HepG2 (cell line): ENCODE measurements at regions of chr15 and their contacts with region 1.

Region 1: DNA sequence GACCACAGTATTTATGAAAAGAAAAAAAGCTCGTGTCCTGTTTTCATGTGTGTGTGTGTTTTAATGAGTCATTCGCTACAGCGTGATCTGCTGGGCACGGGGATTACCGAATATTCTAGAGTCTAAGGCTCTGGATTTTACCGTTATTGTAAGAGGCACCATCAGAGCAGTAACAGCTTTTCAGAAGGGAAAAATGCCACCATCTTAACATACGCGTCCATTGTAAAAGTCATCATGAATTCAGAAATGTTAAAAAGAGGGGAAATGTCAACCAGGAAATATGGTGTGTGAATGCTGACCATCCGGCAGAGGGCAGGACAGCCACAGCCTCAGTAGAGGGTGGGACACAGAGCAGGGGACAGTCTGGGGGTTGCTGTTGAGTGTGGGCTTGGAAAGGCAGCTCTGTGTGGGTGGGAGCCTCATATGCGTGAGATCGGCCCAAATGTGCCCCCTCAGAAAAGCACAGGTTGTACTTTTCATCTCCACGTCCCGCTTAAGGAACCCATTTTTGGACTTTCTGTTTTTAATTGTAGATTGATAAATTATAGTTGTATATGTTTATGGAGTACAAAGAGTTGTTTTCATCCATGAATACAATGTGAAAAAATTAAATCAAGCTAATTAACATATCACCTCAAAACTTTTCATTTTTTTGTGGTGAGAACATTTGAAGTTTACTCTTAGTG is 69.6 kb downstream of the ASB7 start:
- DNase-seq: peak; percentile 33
- ATAC-seq: peak; percentile 93
- H3K4me3 ChIP-seq: no peak overlapping the region
- H3K27ac ChIP-seq: no peak overlapping the region
- H3K4me1 ChIP-seq: no peaks in the 10 kb centered on the region
- H3K27me3 ChIP-seq: peaks cover 0 to 14% of the 10 kb centered on the region in 2 experiments; a peak in 4 of 5 replicates
- CTCF ChIP-seq: peak; percentile 89
- EP300 ChIP-seq: no peak
- POLR2A ChIP-seq: no peak
- RAD21 ChIP-seq: peak; percentile 74

Region 2: GRCh38 chr15:100721770-100722550 is 50.0 kb after region 1 on chr15:
- CTCF ChIA-PET with region 1: no interaction called
- POLR2A ChIA-PET with region 1: no interaction called
- in situ Hi-C with region 1: no loop called
- intact Hi-C with region 1: no loop called
- DNase-seq: peak; percentile 91
- ATAC-seq: peak; percentile 75
- H3K4me3 ChIP-seq: no peak overlapping the region
- H3K27ac ChIP-seq: peak overlapping the region; percentile 20
- H3K4me1 ChIP-seq: peaks cover 32% of the 10 kb centered on the region
- H3K27me3 ChIP-seq: peaks cover 0 to 18% of the 10 kb centered on the region in 2 experiments; a peak in 2 of 5 replicates
- CTCF ChIP-seq: no peak
- EP300 ChIP-seq: peak; percentile 59 to 62; a peak in 2 of 4 replicates
- POLR2A ChIP-seq: no peak
- RAD21 ChIP-seq: no peak

Region 3: DNA sequence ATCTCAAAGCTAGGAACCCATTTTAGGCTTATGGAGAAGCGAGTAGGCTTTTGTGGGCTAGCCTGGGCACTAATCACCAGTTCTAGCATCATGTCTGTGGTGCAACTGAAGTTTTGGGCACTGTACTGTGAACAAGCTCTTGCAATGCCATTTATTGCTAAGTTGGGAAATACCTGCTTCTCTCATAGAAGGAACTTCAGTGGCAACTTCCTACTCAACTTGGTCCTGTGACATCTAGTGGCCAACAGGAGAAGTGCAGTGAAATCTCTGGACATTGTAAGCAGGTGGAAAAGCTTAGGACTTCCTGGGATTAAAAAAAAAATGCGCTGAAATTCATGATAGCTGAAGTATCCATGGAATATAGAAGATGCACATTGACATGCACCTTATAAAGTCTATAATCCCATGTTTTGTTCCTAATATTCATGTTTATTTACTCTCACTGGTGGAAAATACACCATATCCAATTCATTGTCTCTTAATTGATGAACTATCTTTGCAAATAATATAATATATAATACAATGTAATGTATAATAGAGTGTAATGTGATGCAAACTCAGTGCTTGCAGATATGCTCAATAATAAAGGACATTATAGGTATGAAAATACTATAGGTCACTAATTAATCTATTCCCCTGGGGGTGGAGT is 201.2 kb after region 1 on chr15:
- CTCF ChIA-PET with region 1: interaction called, 30 read pairs
- POLR2A ChIA-PET with region 1: no interaction called
- in situ Hi-C with region 1: loop called (anchors 5 kb)
- intact Hi-C with region 1: loop called (anchors 1 kb)
- DNase-seq: peak; percentile 70
- ATAC-seq: peak; percentile 71
- H3K4me3 ChIP-seq: no peak overlapping the region
- H3K27ac ChIP-seq: no peak overlapping the region
- H3K4me1 ChIP-seq: no peaks in the 10 kb centered on the region
- H3K27me3 ChIP-seq: peaks cover 0 to 17% of the 10 kb centered on the region in 2 experiments; a peak in 1 of 5 replicates
- CTCF ChIP-seq: peak; percentile 82
- EP300 ChIP-seq: no peak
- POLR2A ChIP-seq: no peak
- RAD21 ChIP-seq: peak; percentile 49; the same call in 1 of the 2 replicates

Region 4: GRCh38 chr15:100909991-100910955 is 238.3 kb after region 1 on chr15:
- CTCF ChIA-PET with region 1: no interaction called
- POLR2A ChIA-PET with region 1: no interaction called
- in situ Hi-C with region 1: no loop called
- intact Hi-C with region 1: loop called (anchors 1 kb)
- DNase-seq: no peak
- ATAC-seq: peak; percentile 49
- H3K4me3 ChIP-seq: no peak overlapping the region
- H3K27ac ChIP-seq: no peak overlapping the region
- H3K4me1 ChIP-seq: no peaks in the 10 kb centered on the region
- H3K27me3 ChIP-seq: peaks cover 2 to 36% of the 10 kb centered on the region in 2 experiments; a peak in 4 of 5 replicates
- CTCF ChIP-seq: 0 out of 2 replicates have a peak, but pooled peaks have one; percentile 25
- EP300 ChIP-seq: no peak
- POLR2A ChIP-seq: no peak
- RAD21 ChIP-seq: no peak

Region 5: GRCh38 chr15:101008158-101009139 is 336.4 kb after region 1 on chr15:
- CTCF ChIA-PET with region 1: interaction called, 4 read pairs
- POLR2A ChIA-PET with region 1: no interaction called
- in situ Hi-C with region 1: loop called (anchors 25 kb)
- intact Hi-C with region 1: loop called (anchors 1 kb)
- DNase-seq: peak; percentile 64
- ATAC-seq: peak; percentile 90
- H3K4me3 ChIP-seq: peak overlapping the region; percentile 65 to 77 (median 68)
- H3K27ac ChIP-seq: no peak overlapping the region
- H3K4me1 ChIP-seq: peaks cover 18% of the 10 kb centered on the region
- H3K27me3 ChIP-seq: peaks cover 6 to 31% of the 10 kb centered on the region in 2 experiments; a peak in 3 of 5 replicates
- CTCF ChIP-seq: peak; percentile 95
- EP300 ChIP-seq: no peak
- POLR2A ChIP-seq: no peak
- RAD21 ChIP-seq: peak; percentile 38; the same call in 1 of the 2 replicates

Region 6: GRCh38 chr15:101251830-101252820 is 580.1 kb after region 1 on chr15 and contains the start of gene CHSY1:
- CTCF ChIA-PET with region 1: no interaction called
- POLR2A ChIA-PET with region 1: no interaction called
- in situ Hi-C with region 1: loop called (anchors 25 kb)
- intact Hi-C with region 1: no loop called
- DNase-seq: peak; percentile 67
- ATAC-seq: peak; percentile 73
- H3K4me3 ChIP-seq: peak within 1 kb of the TSS; percentile 77 to 82 (median 81)
- H3K27ac ChIP-seq: peak within 1 kb of the TSS; percentile 52
- H3K4me1 ChIP-seq: peaks cover 62% of the 10 kb centered on the region
- H3K27me3 ChIP-seq: no peaks in the 10 kb centered on the region
- CTCF ChIP-seq: 0 out of 2 replicates have a peak, but pooled peaks have one; percentile 28
- EP300 ChIP-seq: no peak
- POLR2A ChIP-seq: peak; percentile 35 to 80; a peak in 3 of 4 replicates
- RAD21 ChIP-seq: peak; percentile 19
- total RNA-seq, gene CHSY1: 12.8 and 13.7 TPM in 2 replicates